WTC11 (cell line): ENCODE measurements at regions of chr14 and their contacts with region 1.

Region 1: DNA sequence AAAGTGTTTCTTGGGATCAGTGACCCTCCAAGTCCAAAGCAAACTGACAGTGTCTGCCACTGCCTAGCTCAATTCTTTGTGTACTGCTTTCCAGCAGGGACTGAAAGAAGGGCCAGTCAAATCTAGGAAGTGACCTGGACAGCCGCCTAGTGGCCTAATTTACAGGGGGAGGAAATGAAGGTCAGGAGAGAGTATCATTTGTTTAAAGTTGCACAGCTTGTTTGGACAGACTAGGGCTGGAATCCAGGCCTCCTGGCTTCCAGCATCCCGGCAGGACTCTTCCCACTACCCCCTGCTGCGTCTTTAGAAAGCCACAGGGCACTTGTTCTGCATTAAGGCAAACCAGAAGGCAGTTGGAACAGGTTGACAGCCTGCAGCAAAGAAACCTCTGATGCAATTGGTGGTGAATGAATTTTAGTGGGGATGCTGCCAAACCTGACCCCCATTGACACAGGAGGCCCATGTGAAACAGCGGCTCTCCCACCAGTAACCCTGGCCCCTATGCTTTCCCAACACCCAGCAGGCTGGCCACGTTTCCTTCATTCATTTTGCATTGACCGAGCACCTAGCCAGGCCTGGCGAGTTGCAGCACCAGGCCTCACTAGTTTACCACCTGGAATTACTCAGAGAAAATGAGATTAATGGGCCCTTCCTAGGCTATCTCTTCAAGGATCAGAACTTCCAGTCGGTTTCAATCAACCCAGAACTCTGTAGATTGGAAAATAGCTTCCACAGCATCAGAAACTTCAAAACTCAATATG is 28.2 kb downstream of the GALNT16 start:
- DNase-seq: no peak
- ATAC-seq: peak; percentile 49
- H3K4me3 Mint-ChIP-seq: no peak overlapping the region
- H3K27ac Mint-ChIP-seq: no peak overlapping the region
- H3K4me1 Mint-ChIP-seq: peaks cover 8% of the 10 kb centered on the region
- H3K27me3 Mint-ChIP-seq: no peaks in the 10 kb centered on the region
- CTCF ChIP-seq: no peak

Region 2: GRCh38 chr14:69242311-69243224 is 45.6 kb before region 1 on chr14:
- CTCF ChIA-PET with region 1: interaction called, 10 read pairs
- POLR2A ChIA-PET with region 1: no interaction called
- DNase-seq: peak; percentile 67
- ATAC-seq: peak; percentile 80
- H3K4me3 Mint-ChIP-seq: no peak overlapping the region
- H3K27ac Mint-ChIP-seq: no peak overlapping the region
- H3K4me1 Mint-ChIP-seq: peaks cover 6% of the 10 kb centered on the region
- H3K27me3 Mint-ChIP-seq: no peaks in the 10 kb centered on the region
- CTCF ChIP-seq: peak; percentile 73

Region 3: DNA sequence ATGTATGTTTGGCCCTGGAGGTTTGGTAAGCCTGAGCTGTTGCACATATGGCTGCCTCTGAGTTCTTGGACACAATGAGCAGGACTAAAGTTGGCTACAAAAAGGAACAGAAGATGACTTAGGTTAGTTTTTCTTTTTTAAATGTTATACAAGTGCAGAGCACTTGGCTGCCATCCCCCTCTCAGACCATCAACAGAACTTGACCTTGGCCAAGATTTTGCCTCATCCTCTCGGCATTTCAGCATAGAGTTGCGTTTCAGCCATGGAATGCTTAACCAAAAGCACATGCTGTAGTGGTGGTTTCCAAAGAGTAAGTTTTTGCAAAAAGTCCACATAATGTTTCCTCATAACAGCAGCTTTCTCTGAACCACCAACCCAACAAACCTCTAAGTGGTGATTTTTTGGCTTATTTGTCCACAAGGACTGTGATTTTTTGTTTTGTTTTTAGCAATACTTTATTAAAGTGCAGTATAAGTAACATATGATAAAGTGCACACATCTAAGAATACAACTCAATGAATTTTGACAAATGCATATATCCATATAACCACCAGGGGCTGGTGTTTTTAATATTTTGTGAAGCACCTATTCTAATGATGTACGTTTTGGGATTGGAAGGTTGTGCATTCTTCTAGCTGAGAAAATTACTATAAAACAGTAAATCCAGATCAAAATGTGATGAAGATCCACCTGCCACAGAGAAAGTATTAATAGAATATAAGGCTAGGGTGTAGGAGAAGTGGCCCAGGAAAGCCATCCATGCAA is 40.3 kb before region 1 on chr14:
- CTCF ChIA-PET with region 1: interaction called, 10 read pairs
- POLR2A ChIA-PET with region 1: no interaction called
- DNase-seq: no peak
- ATAC-seq: no peak
- H3K4me3 Mint-ChIP-seq: no peak overlapping the region
- H3K27ac Mint-ChIP-seq: no peak overlapping the region
- H3K4me1 Mint-ChIP-seq: no peaks in the 10 kb centered on the region
- H3K27me3 Mint-ChIP-seq: no peaks in the 10 kb centered on the region
- CTCF ChIP-seq: no peak

Region 4: GRCh38 chr14:69260861-69261564 is 27.2 kb before region 1 on chr14:
- CTCF ChIA-PET with region 1: interaction called, 37 read pairs
- POLR2A ChIA-PET with region 1: no interaction called
- DNase-seq: peak; percentile 73
- ATAC-seq: peak; percentile 43
- H3K4me3 Mint-ChIP-seq: peak overlapping the region; percentile 79
- H3K27ac Mint-ChIP-seq: no peak overlapping the region
- H3K4me1 Mint-ChIP-seq: peaks cover 21% of the 10 kb centered on the region
- H3K27me3 Mint-ChIP-seq: peaks cover 57% of the 10 kb centered on the region
- CTCF ChIP-seq: peak; percentile 82

Region 5: DNA sequence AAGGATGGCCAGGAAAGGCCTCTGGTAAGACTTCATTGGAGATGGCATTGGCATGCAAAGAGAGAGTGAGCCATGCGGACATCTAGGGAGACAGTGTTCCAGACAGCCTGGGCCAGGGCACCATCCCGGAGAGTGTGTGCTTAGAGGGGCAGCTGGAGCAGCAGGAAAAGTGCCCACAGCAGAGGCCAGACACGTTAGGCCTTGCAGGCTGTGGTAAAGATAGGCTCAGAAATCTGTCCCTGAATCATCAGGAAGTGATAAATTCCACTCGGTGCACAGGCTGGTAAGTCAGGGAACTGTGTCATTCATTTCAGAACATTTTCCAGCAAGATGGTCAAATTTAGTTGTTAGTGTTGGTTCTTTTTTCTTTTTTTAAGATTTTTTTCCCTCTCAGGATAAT is 19.4 kb before region 1 on chr14:
- CTCF ChIA-PET with region 1: interaction called, 11 read pairs
- POLR2A ChIA-PET with region 1: interaction called, 3 read pairs
- DNase-seq: no peak
- ATAC-seq: no peak
- H3K4me3 Mint-ChIP-seq: no peak overlapping the region
- H3K27ac Mint-ChIP-seq: no peak overlapping the region
- H3K4me1 Mint-ChIP-seq: no peaks in the 10 kb centered on the region
- H3K27me3 Mint-ChIP-seq: no peaks in the 10 kb centered on the region
- CTCF ChIP-seq: no peak

Region 6: DNA sequence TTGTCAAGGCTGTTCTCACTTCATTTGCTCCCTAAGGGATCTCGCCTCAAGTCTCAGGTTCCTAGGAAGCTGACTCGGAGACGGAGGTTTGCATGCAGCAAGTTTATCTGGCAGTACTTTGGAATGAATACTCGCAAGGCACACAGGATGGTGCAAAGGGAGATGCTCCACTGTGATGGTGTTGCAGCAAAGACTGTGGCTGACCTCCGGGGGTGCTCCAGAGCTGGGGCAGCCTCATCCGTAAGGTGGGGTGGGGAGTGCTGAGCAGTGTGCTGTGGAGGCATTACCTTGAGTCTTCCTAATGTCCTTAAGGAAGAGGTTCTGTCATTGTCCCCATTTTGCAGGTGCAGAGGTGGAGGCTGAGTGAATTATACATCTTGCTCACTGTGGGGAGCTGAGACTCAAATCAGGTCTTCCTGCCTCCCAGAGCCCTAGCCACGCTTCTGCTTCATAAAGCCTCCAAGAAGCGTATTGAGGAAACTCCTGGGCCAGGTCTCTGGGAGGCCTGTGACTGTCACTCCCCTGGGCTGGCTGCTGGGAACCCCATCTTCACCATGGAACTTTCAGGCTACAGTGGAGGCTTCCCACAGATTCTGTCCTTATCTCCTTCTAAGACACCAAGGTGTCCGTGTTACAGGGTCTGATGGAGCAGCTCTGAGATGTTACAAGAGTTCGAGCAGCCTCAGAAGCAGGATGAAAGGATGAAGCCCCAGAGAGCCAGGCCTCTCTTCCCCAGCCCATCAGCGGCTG is 11.3 kb after region 1 on chr14:
- CTCF ChIA-PET with region 1: interaction called, 10 read pairs
- POLR2A ChIA-PET with region 1: no interaction called
- DNase-seq: peak; percentile 65
- ATAC-seq: peak; percentile 99
- H3K4me3 Mint-ChIP-seq: no peak overlapping the region
- H3K27ac Mint-ChIP-seq: no peak overlapping the region
- H3K4me1 Mint-ChIP-seq: 0 out of 2 replicates have a peak, but pooled peaks cover 3% of the 10 kb centered on the region
- H3K27me3 Mint-ChIP-seq: no peaks in the 10 kb centered on the region; the same call in 1 of the 2 replicates
- CTCF ChIP-seq: no peak

Region 7: GRCh38 chr14:69363055-69363454 is 74.9 kb after region 1 on chr14:
- CTCF ChIA-PET with region 1: interaction called, 14 read pairs
- POLR2A ChIA-PET with region 1: no interaction called
- DNase-seq: peak; percentile 63
- ATAC-seq: peak; percentile 99
- H3K4me3 Mint-ChIP-seq: no peak overlapping the region
- H3K27ac Mint-ChIP-seq: no peak overlapping the region; the same call in 1 of the 2 replicates
- H3K4me1 Mint-ChIP-seq: no peaks in the 10 kb centered on the region
- H3K27me3 Mint-ChIP-seq: no peaks in the 10 kb centered on the region
- CTCF ChIP-seq: no peak